Esophagus squamous epithelium (tissue), 5 donors: ENCODE measurements at regions of chr11 and their contacts with region 1.

Region 1: GRCh38 chr11:86938900-86939880 is 16.0 kb downstream of the FZD4 start:
- DNase-seq: no peak
- H3K4me3 ChIP-seq: no peak overlapping the region
- H3K27ac ChIP-seq: peak overlapping the region in 3 of 4 donors; percentile 59 to 78 (median 75)
- H3K4me1 ChIP-seq: peaks cover 0 to 63% (median 15%) of the 10 kb centered on the region in 3 donors
- H3K27me3 ChIP-seq: no peaks in the 10 kb centered on the region
- CTCF ChIP-seq: peak; percentile 27 to 78 (median 64)
- POLR2A ChIP-seq: no peak

Region 2: GRCh38 chr11:86740709-86741483 is 198.3 kb before region 1 on chr11:
- intact Hi-C with region 1: no loop called
- DNase-seq: no peak
- H3K4me3 ChIP-seq: no peak overlapping the region
- H3K27ac ChIP-seq: peak overlapping the region; percentile 78 to 94 (median 90)
- H3K4me1 ChIP-seq: peaks cover 23 to 82% (median 53%) of the 10 kb centered on the region in 3 donors
- H3K27me3 ChIP-seq: no peaks in the 10 kb centered on the region
- CTCF ChIP-seq: no peak
- POLR2A ChIP-seq: no peak

Region 3: GRCh38 chr11:87076260-87076783 is 137.1 kb after region 1 on chr11:
- intact Hi-C with region 1: no loop called
- DNase-seq: no peak
- H3K4me3 ChIP-seq: no peak overlapping the region
- H3K27ac ChIP-seq: no peak overlapping the region
- H3K4me1 ChIP-seq: no peaks in the 10 kb centered on the region
- H3K27me3 ChIP-seq: no peaks in the 10 kb centered on the region
- CTCF ChIP-seq: no peak
- POLR2A ChIP-seq: no peak

Region 4: DNA sequence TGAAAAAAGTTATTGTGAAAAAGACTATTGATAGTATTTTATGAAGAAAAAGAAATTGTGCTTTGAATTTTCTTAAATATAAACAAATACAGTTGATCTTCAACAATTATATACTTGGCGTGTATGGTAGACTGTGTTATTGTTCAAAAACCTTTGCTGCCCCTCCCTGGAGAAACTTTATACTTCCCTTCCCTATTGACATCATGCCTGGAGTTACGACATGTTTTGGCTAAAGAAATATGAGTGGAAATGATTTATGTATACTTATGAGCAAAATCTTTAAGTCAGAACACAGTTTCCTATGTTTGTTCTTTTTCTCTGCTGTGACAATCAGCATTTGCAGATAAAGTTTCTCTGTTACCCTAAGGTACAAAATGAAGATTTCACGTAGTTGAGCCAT is 342.3 kb after region 1 on chr11:
- intact Hi-C with region 1: loop called (anchors 5 kb)
- DNase-seq: no peak
- H3K4me3 ChIP-seq: no peak overlapping the region
- H3K27ac ChIP-seq: no peak overlapping the region
- H3K4me1 ChIP-seq: peaks cover 0 to 8% (median 2%) of the 10 kb centered on the region in 3 donors
- H3K27me3 ChIP-seq: no peaks in the 10 kb centered on the region
- CTCF ChIP-seq: peak in 2 of 6 experiments; percentile 19 to 25
- POLR2A ChIP-seq: no peak

Region 5: GRCh38 chr11:87421422-87421821 is 482.2 kb after region 1 on chr11:
- intact Hi-C with region 1: loop called (anchors 10 kb)
- DNase-seq: no peak
- H3K4me3 ChIP-seq: no peak overlapping the region
- H3K27ac ChIP-seq: no peak overlapping the region
- H3K4me1 ChIP-seq: no peaks in the 10 kb centered on the region
- H3K27me3 ChIP-seq: no peaks in the 10 kb centered on the region
- CTCF ChIP-seq: peak; percentile 54 to 78 (median 69)
- POLR2A ChIP-seq: no peak